AG04449 (cell line): ENCODE measurements at regions of chr6 and their contacts with region 1.

Region 1: GRCh38 chr6:34459899-34460593 is 5.8 kb upstream of the PACSIN1 start:
- DNase-seq: no peak
- H3K4me3 ChIP-seq: no peak overlapping the region
- CTCF ChIP-seq: peak; percentile 45

Region 2: GRCh38 chr6:34437644-34437970 is 22.4 kb before region 1 on chr6:
- CTCF ChIA-PET with region 1: no interaction called
- POLR2A ChIA-PET with region 1: no interaction called
- DNase-seq: no peak
- H3K4me3 ChIP-seq: no peak overlapping the region
- CTCF ChIP-seq: no peak

Region 3: DNA sequence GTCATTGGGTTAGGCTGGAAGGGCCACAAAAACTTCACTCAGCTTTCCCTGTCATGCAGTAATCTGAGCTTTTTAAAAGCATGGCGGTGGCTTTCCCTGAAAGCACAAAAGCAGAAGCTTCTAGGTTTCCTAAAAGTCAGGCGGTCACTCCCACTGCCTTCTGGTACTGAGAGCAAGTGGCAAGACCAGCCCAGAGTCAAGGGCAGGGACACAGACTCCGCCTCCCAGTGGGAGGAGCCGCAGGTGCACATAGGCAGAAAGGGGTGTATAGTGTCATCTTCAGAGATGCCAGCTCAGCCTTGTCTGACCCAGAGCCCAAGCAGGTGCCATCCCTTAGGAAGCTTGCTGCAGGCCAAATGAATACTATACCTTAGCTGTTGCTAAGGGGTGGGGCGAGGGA is 12.1 kb before region 1 on chr6:
- CTCF ChIA-PET with region 1: interaction called, 12 read pairs
- POLR2A ChIA-PET with region 1: no interaction called
- DNase-seq: no peak
- H3K4me3 ChIP-seq: no peak overlapping the region
- CTCF ChIP-seq: no peak

Region 4: DNA sequence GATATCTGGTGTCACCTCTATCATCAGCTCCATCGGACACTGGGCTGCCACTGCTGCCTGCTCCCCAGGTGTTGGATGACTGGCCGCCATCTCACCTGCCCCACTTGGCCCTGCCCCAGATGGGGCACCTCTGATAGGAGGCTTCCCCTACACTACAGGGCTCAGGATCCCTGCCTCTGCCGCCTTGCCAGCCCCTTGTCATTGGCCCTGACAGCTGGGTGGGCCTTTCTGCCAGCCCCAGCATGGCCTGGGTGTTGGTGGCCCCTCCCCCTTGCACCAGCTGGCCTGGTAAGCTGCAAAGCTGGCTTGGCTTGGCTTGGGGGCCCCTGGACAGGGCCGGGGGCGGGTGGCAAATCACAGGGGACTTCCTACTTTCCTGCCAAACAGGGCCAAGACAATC is 16.4 kb after region 1 on chr6:
- CTCF ChIA-PET with region 1: interaction called, 15 read pairs
- POLR2A ChIA-PET with region 1: no interaction called
- DNase-seq: no peak
- H3K4me3 ChIP-seq: no peak overlapping the region
- CTCF ChIP-seq: no peak